Caco-2 (cell line): ENCODE measurements at regions of chr5 and their contacts with region 1.

Region 1: GRCh38 chr5:60677844-60678664 is 21.9 kb downstream of the DEPDC1B start:
- DNase-seq: peak; percentile 50 to 64
- H3K4me3 ChIP-seq: no peak overlapping the region
- H3K4me3 Mint-ChIP-seq: peak overlapping the region; percentile 56
- H3K27ac Mint-ChIP-seq: peak overlapping the region; percentile 31
- H3K4me1 ChIP-seq: peaks cover 50% of the 10 kb centered on the region
- H3K4me1 Mint-ChIP-seq: peaks cover 65% of the 10 kb centered on the region
- H3K27me3 ChIP-seq: no peaks in the 10 kb centered on the region
- H3K27me3 Mint-ChIP-seq: no peaks in the 10 kb centered on the region
- CTCF ChIP-seq: peak; percentile 36 to 67

Region 2: DNA sequence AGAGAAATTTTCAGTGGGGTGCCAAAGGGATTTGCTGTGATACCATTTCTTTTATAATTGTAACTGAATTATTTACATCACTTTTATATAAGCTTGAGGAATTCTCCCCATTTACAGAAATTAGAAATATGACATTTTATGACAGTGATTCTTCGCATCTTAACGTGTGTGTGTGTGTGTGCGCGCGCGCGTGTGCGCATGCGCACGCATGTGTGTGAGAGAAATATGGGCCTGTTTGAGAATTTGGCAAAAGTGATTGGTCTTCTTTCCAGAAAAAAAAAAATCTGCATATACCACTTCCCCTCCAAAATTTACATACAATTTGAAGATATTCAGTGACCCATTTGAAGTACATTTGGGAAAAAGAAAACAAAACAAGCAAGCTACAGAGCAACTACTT is 593.8 kb before region 1 on chr5:
- CTCF ChIA-PET with region 1: no interaction called
- POLR2A ChIA-PET with region 1: no interaction called
- intact Hi-C with region 1: no loop called
- DNase-seq: no peak
- H3K4me3 ChIP-seq: no peak overlapping the region
- H3K4me3 Mint-ChIP-seq: no peak overlapping the region
- H3K27ac Mint-ChIP-seq: no peak overlapping the region
- H3K4me1 ChIP-seq: no peaks in the 10 kb centered on the region
- H3K4me1 Mint-ChIP-seq: no peaks in the 10 kb centered on the region
- H3K27me3 ChIP-seq: no peaks in the 10 kb centered on the region
- H3K27me3 Mint-ChIP-seq: no peaks in the 10 kb centered on the region
- CTCF ChIP-seq: no peak

Region 3: GRCh38 chr5:60710373-60710772 is 32.3 kb after region 1 on chr5:
- CTCF ChIA-PET with region 1: interaction called, 11 read pairs
- POLR2A ChIA-PET with region 1: no interaction called
- intact Hi-C with region 1: no loop called
- DNase-seq: no peak
- H3K4me3 ChIP-seq: no peak overlapping the region
- H3K4me3 Mint-ChIP-seq: no peak overlapping the region
- H3K27ac Mint-ChIP-seq: no peak overlapping the region
- H3K4me1 ChIP-seq: no peaks in the 10 kb centered on the region
- H3K4me1 Mint-ChIP-seq: no peaks in the 10 kb centered on the region
- H3K27me3 ChIP-seq: no peaks in the 10 kb centered on the region
- H3K27me3 Mint-ChIP-seq: no peaks in the 10 kb centered on the region
- CTCF ChIP-seq: peak in 1 of 2 experiments; percentile 11

Region 4: DNA sequence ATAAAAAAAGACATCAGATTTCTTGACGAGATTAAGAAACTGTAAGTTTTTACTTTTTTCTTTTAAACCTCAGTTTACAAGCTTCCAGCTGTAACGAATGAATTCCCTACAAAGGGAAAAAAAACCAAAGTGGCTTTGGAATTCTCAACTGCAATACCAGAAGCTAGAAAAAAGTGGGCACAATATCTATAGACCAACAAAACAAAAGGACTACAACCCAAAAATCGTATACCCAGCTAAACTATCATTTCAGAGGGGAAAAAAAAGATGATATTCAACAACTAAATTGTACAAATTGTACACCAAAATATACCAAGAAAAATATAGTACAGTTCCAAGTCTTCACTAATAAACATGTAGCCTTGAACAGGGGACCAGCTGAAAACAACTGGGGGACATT is 192.8 kb after region 1 on chr5:
- CTCF ChIA-PET with region 1: no interaction called
- POLR2A ChIA-PET with region 1: no interaction called
- intact Hi-C with region 1: no loop called
- DNase-seq: no peak
- H3K4me3 ChIP-seq: no peak overlapping the region
- H3K4me3 Mint-ChIP-seq: no peak overlapping the region
- H3K27ac Mint-ChIP-seq: no peak overlapping the region
- H3K4me1 ChIP-seq: no peaks in the 10 kb centered on the region
- H3K4me1 Mint-ChIP-seq: no peaks in the 10 kb centered on the region
- H3K27me3 ChIP-seq: no peaks in the 10 kb centered on the region
- H3K27me3 Mint-ChIP-seq: no peaks in the 10 kb centered on the region
- CTCF ChIP-seq: no peak

Region 5: GRCh38 chr5:60883229-60883628 is 205.2 kb after region 1 on chr5:
- CTCF ChIA-PET with region 1: no interaction called
- POLR2A ChIA-PET with region 1: no interaction called
- intact Hi-C with region 1: loop called (anchors 1 kb)
- DNase-seq: no peak
- H3K4me3 ChIP-seq: no peak overlapping the region
- H3K4me3 Mint-ChIP-seq: no peak overlapping the region
- H3K27ac Mint-ChIP-seq: no peak overlapping the region
- H3K4me1 ChIP-seq: no peaks in the 10 kb centered on the region
- H3K4me1 Mint-ChIP-seq: no peaks in the 10 kb centered on the region
- H3K27me3 ChIP-seq: no peaks in the 10 kb centered on the region
- H3K27me3 Mint-ChIP-seq: no peaks in the 10 kb centered on the region
- CTCF ChIP-seq: peak; percentile 16 to 38

Region 6: DNA sequence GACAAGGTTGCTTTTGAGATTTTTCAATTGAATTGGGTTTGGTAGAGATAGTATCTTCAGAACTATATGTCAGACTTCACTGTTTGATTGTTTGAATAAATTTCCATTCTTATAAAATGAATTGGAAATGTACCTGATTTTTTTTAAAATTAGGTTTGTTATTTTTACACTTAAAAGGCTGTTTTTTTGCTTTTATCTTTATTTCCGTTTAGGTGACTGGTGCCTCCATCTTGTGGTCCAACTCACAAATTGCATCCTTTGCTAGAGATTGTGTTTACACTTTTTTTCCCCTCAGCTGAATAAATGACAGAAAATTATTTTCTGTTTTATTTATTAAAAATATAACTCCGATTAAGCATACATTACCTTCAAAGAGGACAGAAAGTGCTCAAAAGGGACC is 282.5 kb after region 1 on chr5:
- CTCF ChIA-PET with region 1: no interaction called
- POLR2A ChIA-PET with region 1: no interaction called
- intact Hi-C with region 1: loop called (anchors 1 kb)
- DNase-seq: no peak
- H3K4me3 ChIP-seq: no peak overlapping the region
- H3K4me3 Mint-ChIP-seq: no peak overlapping the region
- H3K27ac Mint-ChIP-seq: no peak overlapping the region
- H3K4me1 ChIP-seq: no peaks in the 10 kb centered on the region
- H3K4me1 Mint-ChIP-seq: no peaks in the 10 kb centered on the region
- H3K27me3 ChIP-seq: no peaks in the 10 kb centered on the region
- H3K27me3 Mint-ChIP-seq: no peaks in the 10 kb centered on the region
- CTCF ChIP-seq: peak; percentile 56 to 70

Region 7: GRCh38 chr5:61319388-61320146 is 641.5 kb after region 1 on chr5:
- CTCF ChIA-PET with region 1: no interaction called
- POLR2A ChIA-PET with region 1: no interaction called
- intact Hi-C with region 1: no loop called
- DNase-seq: no peak
- H3K4me3 ChIP-seq: no peak overlapping the region
- H3K4me3 Mint-ChIP-seq: no peak overlapping the region
- H3K27ac Mint-ChIP-seq: no peak overlapping the region
- H3K4me1 ChIP-seq: no peaks in the 10 kb centered on the region
- H3K4me1 Mint-ChIP-seq: no peaks in the 10 kb centered on the region
- H3K27me3 ChIP-seq: no peaks in the 10 kb centered on the region
- H3K27me3 Mint-ChIP-seq: no peaks in the 10 kb centered on the region
- CTCF ChIP-seq: no peak